ENCODE measurements at regions of chr15 and their contacts with region 1.

Region 1: DNA sequence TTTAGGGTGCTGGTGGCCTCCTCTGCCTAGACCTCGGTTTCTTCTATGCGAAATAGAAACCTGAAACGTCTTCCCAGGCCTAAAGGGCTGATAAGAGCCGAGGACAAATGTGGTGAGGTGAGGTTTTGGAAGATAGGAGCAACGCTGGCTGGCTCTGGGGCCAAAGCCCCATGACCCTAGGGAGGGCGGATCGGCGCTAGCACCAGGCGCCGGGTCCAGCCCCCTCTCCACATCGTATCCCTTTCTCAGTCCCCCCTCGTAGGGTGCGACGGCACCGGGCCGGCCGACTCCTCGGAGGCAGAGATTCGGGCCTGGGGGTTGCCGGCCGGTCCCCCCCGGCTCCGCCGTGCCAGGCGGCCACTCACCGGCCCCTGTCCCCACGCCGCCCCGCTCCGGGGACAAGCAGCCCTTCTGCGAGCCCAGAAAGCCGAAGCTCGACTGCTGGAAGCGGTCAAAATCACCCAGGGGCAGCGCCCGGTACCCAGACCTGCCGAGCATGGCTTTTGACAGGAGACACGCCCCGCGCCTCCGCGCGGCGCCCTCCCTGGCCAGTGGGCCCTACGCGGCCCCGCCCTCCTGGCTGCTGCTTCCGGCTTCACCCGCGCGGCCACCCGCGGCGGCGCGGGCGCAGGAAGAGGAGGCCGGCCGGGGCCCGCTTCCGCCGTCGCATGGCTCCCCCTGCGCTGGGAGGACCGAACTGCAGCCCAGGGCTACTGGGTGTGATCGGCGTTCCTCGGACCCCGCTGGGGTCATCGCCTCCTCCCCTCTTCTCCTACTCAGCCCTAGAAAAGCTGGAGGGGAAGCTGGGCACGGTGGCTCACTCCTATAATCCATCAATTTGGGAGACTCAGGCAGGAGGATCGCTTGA is at the start of gene STOML1:
- DNase-seq: peak; percentile 71 to 96
- H3K4me3 ChIP-seq: peak within 1 kb of the TSS; percentile 83 to 85
- H3K27ac ChIP-seq: peak within 1 kb of the TSS; percentile 90
- H3K4me1 ChIP-seq: peaks cover 13 to 51% of the 10 kb centered on the region in 2 donors
- H3K27me3 ChIP-seq: no peaks in the 10 kb centered on the region
- CTCF ChIP-seq: peak; percentile 90 to 97 (median 94)
- total RNA-seq, gene STOML1: 15.3 TPM

Region 2: DNA sequence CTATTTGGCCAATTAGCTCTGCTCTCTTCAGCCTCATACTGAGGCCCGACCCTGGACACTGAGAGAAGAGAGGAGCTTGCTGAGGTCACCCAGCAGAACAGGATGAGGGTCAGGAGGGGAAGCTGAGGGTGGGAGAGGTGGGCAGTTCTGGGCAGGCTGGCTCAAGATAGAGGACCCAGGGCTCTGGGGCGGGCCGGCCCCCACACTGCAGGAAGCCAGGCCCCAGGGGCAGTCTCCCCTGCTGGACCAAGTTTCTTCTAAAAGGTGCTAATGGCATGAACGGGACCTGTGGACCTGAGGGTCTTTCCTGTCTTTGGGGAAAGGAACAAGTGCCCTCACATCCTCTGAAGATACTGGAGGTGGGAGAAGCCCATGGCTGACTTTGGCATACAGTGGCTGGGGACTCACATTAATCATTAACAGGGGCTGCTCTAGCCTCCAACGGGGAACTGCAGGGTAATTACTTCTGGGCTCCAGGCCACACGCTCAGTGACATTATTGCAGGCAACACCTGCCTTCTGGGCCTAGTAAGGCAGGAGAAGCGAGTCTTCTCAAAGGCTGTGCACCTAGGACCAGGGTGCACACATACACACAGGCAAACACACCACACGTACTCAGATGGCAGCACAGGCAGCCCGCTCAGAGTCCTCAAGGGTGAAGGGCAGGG is 633.8 kb before region 1 on chr15:
- intact Hi-C with region 1: no loop called
- DNase-seq: no peak
- H3K4me3 ChIP-seq: no peak overlapping the region
- H3K27ac ChIP-seq: no peak overlapping the region
- H3K4me1 ChIP-seq: no peaks in the 10 kb centered on the region
- H3K27me3 ChIP-seq: no peaks in the 10 kb centered on the region
- CTCF ChIP-seq: no peak

Region 3: DNA sequence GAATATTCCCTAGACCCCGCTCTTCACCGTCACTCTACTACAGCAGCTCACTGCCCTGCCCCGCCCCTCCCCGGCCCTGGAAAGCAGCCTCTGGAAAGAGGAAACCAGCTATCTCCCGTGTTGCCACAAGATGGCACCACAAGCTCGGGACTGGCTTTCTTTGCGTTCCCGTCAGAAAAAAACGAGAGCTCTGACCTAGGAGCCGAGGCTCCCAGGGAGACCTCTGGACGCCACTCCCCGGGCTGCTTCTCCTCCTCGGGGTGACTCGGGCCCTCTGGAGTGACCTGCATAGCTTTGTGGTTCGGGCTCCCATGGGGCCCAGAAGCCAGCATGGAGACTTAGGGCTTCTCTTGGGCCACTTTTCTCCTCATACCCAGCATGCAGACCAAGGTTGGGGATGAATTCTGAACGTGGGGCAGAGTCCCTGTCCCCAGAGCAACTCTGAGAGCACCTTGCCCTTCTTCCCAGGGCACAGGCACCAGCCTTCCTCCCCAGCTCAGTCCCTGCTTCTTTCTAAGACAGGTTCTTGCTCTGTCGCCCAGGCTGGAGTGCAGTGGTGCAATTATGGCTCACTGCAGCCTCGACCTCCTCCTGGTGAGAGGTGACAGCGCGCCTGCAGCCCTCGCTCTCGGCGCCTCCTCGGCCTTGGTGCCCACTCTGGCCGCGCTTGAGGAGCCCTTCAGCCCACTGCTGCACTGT is 18.8 kb before region 1 on chr15:
- intact Hi-C with region 1: loop called (anchors 1 kb)
- DNase-seq: peak; percentile 21 to 93
- H3K4me3 ChIP-seq: peak overlapping the region; percentile 39 to 50
- H3K27ac ChIP-seq: no peak overlapping the region
- H3K4me1 ChIP-seq: peaks cover 0 to 8% of the 10 kb centered on the region in 2 donors
- H3K27me3 ChIP-seq: no peaks in the 10 kb centered on the region
- CTCF ChIP-seq: peak; percentile 90 to 92 (median 91)

Region 4: DNA sequence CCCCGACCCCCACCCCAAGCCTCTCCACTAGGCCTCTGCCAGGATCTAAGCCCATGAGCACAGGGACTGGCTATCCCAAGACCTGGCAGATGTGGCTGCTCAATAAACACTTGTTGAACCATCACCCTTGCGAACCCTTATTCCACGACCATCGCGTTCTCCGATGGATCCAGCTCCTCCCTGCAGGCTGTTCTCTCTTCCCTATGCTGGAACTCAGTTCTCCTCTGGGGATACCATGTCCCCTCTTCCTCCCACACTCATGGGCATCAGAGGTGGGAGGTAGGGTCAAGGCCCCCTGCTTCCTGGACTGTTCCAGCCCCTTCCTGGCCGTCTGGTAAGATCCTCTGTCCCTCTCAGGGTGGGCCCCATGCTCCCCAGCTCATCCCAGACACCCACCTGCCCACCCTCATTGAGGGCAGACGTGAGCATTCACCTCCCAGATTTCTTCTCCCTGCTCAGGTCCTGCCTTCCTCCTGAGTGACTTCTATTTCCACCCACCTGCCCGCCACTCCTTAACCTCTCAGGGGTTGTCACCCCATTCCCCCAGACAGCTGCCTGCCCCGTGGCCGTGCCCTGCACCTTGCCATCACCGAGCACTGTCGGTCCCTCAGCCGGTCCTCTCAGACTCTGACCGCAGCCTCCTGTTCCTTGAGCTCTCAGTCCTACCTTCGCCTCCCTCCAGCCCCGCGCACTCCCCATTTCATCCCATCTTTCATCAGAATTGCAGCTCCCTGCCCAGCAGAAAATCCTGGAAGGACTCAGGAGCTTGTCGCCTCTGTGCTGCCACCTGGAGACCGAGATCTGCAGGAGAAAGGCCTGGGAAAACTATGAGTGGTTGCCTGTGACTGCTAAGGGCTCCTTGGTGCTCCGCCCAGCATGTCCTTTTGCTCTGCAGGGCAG is 44.6 kb after region 1 on chr15:
- intact Hi-C with region 1: loop called (anchors 2 kb)
- DNase-seq: peak in 1 of 2 donors; percentile 81
- H3K4me3 ChIP-seq: no peak overlapping the region
- H3K27ac ChIP-seq: peak overlapping the region in 1 of 2 donors; percentile 7
- H3K4me1 ChIP-seq: peaks cover 16 to 25% of the 10 kb centered on the region in 2 donors
- H3K27me3 ChIP-seq: no peaks in the 10 kb centered on the region
- CTCF ChIP-seq: peak in 2 of 3 experiments; percentile 29 to 54

Region 5: GRCh38 chr15:74053941-74054529 is 62.1 kb after region 1 on chr15:
- intact Hi-C with region 1: loop called (anchors 2 kb)
- DNase-seq: peak in 1 of 2 donors; percentile 86
- H3K4me3 ChIP-seq: peak overlapping the region; percentile 15 to 32
- H3K27ac ChIP-seq: peak overlapping the region; percentile 94 to 97
- H3K4me1 ChIP-seq: peaks cover 28 to 46% of the 10 kb centered on the region in 2 donors
- H3K27me3 ChIP-seq: no peaks in the 10 kb centered on the region
- CTCF ChIP-seq: peak; percentile 47 to 83 (median 82)

Region 6: GRCh38 chr15:74322181-74323076 is 330.5 kb after region 1 on chr15:
- intact Hi-C with region 1: loop called (anchors 5 kb)
- DNase-seq: peak in 1 of 2 donors; percentile 75
- H3K4me3 ChIP-seq: no peak overlapping the region
- H3K27ac ChIP-seq: no peak overlapping the region
- H3K4me1 ChIP-seq: peaks cover 12 to 19% of the 10 kb centered on the region in 2 donors
- H3K27me3 ChIP-seq: no peaks in the 10 kb centered on the region
- CTCF ChIP-seq: peak; percentile 85 to 93 (median 91)

Region 7: GRCh38 chr15:74460871-74461846 is 469.2 kb after region 1 on chr15 and contains the start of gene UBL7:
- intact Hi-C with region 1: loop called (anchors 5 kb)
- DNase-seq: peak; percentile 95 to 99
- H3K4me3 ChIP-seq: peak within 1 kb of the TSS; percentile 65 to 70
- H3K27ac ChIP-seq: peak within 1 kb of the TSS; percentile 68 to 79
- H3K4me1 ChIP-seq: peaks cover 6 to 9% of the 10 kb centered on the region in 2 donors
- H3K27me3 ChIP-seq: no peaks in the 10 kb centered on the region
- CTCF ChIP-seq: peak in 1 of 3 experiments; percentile 21
- total RNA-seq, gene UBL7: 63.4 TPM